Left lung (tissue), 14 donors: ENCODE measurements at regions of chr10 and their contacts with region 1.

Region 1: DNA sequence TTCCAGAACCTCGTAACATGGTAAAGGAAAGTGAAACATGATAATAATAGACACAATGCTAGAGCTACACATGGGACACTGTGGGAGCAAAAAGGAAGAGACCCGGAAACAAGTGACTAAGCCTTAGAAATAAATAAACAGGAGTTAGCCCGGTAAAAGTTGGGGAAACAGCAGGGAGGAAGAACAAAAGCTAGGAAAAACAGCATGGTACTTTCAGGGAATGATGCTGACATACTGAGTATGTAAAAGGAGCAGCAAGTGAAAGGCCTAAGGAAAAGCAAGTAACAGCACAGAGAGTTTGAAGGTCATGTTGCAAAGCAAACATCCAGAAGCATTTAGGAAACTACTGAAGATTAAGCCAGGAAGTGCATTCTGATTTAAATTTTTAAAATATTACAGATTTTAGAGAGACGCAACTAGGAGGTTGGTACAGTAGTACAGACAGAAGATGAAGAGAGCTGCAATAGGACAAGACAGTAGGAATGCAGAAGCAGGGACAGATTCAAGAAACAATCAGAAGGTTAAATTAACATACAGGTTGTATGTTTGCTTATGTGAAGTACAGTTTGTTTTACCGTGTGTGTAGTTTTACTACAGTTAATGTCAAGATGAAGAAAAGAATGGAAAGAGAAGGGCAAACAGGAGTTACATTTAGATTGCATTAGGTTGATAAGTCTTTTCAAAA is 63.7 kb downstream of the ARHGAP12 start:
- DNase-seq: no peak
- ATAC-seq: peak; percentile 34
- H3K4me3 ChIP-seq: no peak overlapping the region
- H3K27ac ChIP-seq: peak overlapping the region in 1 of 2 donors; percentile 11
- H3K4me1 ChIP-seq: peaks cover 0 to 35% of the 10 kb centered on the region in 2 donors
- H3K27me3 ChIP-seq: no peaks in the 10 kb centered on the region
- CTCF ChIP-seq: no peak

Region 2: GRCh38 chr10:31947144-31947926 is 82.4 kb after region 1 on chr10:
- intact Hi-C with region 1: loop called in 1 of 2 experiments (anchors 5 kb)
- DNase-seq: peak in 2 of 4 donors; percentile 53 to 73
- ATAC-seq: peak; percentile 87
- H3K4me3 ChIP-seq: no peak overlapping the region
- H3K27ac ChIP-seq: peak overlapping the region; percentile 28 to 39
- H3K4me1 ChIP-seq: peaks cover 5 to 31% of the 10 kb centered on the region in 2 donors
- H3K27me3 ChIP-seq: no peaks in the 10 kb centered on the region
- CTCF ChIP-seq: peak in 1 of 2 donors; percentile 14

Region 3: DNA sequence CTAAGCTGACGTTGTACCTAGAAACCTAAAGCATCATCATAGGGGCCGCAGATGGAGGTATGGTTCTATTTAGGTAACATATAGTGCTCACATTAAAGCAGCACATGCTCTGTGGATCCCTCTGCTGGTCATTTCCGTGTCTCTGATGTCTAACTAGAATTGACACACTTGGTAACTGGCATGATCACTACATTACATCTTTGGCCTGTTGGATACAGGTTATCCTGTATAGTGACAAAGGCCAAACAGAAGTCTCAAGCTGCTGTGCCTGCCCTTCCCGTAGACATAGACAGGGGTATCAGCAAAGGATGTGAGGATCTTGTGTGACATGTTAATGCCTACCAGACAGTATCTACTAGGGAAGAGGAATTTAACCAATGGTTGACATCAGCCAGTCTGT is 140.1 kb after region 1 on chr10:
- intact Hi-C with region 1: loop called in 1 of 2 experiments (anchors 10 kb)
- DNase-seq: peak in 2 of 4 donors; percentile 6 to 15
- ATAC-seq: peak; percentile 66
- H3K4me3 ChIP-seq: no peak overlapping the region
- H3K27ac ChIP-seq: no peak overlapping the region
- H3K4me1 ChIP-seq: no peaks in the 10 kb centered on the region
- H3K27me3 ChIP-seq: no peaks in the 10 kb centered on the region
- CTCF ChIP-seq: peak; percentile 25 to 41